Right lobe of liver (tissue), 6 donors: ENCODE measurements at regions of chr3 and their contacts with region 1.

Region 1: GRCh38 chr3:105527949-105528348 is 161.2 kb downstream of the ALCAM start:
- DNase-seq: no peak
- ATAC-seq: no peak
- H3K4me3 ChIP-seq: no peak overlapping the region
- H3K27ac ChIP-seq: no peak overlapping the region
- H3K4me1 ChIP-seq: no peaks in the 10 kb centered on the region
- H3K27me3 ChIP-seq: no peaks in the 10 kb centered on the region
- CTCF ChIP-seq: no peak
- POLR2A ChIP-seq: no peak

Region 2: DNA sequence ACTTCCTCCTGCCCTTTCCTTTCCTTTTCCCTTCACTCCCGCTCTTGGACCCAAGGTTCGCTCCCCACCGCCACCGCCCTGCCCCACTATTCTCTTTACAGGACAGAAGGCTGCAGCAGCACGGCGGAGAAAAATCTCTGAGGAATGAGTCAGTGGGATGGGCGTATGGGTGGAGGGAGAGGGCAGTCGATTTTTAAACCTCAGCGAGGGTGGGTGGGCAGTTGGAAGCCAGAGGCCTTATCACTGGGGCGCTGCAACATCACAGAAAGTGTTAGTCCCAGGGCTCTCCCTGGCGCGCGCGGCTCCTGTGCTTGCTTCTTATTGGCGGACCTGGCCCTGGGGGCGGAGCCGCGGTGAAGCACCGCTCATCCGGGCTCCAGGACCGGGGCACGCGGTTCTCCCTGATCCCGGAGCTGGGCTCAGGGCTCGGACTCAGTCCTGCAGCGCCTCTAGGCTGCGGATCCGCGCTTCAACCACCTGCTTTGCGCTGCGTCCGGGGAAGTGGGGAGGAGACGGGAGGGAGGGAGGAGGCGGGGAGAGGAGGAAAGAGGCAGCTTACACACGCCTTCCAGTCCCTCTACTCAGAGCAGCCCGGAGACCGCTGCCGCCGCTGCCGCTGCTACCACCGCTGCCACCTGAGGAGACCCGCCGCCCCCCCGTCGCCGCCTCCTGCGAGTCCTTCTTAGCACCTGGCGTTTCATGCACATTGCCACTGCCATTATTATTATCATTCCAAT is 161.5 kb before region 1 on chr3 and contains the start of gene ALCAM:
- intact Hi-C with region 1: loop called in 1 of 2 experiments (anchors 10 kb)
- DNase-seq: peak; percentile 97 to 98 (median 98)
- ATAC-seq: peak; percentile 77 to 94 (median 84)
- H3K4me3 ChIP-seq: peak within 1 kb of the TSS; percentile 70 to 78 (median 73)
- H3K27ac ChIP-seq: peak within 1 kb of the TSS; percentile 82 to 93 (median 91)
- H3K4me1 ChIP-seq: peaks cover 0 to 11% (median 3%) of the 10 kb centered on the region in 4 donors
- H3K27me3 ChIP-seq: no peaks in the 10 kb centered on the region
- CTCF ChIP-seq: peak; percentile 44 to 76 (median 52)
- POLR2A ChIP-seq: peak; percentile 96
- total RNA-seq, gene ALCAM: 21.9 to 43.4 (median 34.5) TPM